CD4-positive, alpha-beta memory T cell (primary cell): ENCODE measurements at regions of chr3 and their contacts with region 1.

Region 1: GRCh38 chr3:142279965-142280590 is 54.7 kb upstream of the GK5 start:
- DNase-seq: peak; percentile 47 to 64 (median 60)
- H3K4me3 ChIP-seq: no peak overlapping the region
- H3K4me3 Mint-ChIP-seq: no peak overlapping the region
- H3K27ac ChIP-seq: no peak overlapping the region
- H3K27ac Mint-ChIP-seq: peak overlapping the region in 1 of 7 donors; percentile 38
- H3K4me1 ChIP-seq: peaks cover 3% of the 10 kb centered on the region
- H3K4me1 Mint-ChIP-seq: peaks cover 13 to 24% (median 17%) of the 10 kb centered on the region in 4 donors
- H3K27me3 ChIP-seq: no peaks in the 10 kb centered on the region
- H3K27me3 Mint-ChIP-seq: no peaks in the 10 kb centered on the region

Region 2: GRCh38 chr3:140736863-140737460 is 1543.1 kb before region 1 on chr3:
- CTCF ChIA-PET with region 1: no interaction called
- POLR2A ChIA-PET with region 1: no interaction called
- intact Hi-C with region 1: no loop called
- DNase-seq: no peak
- H3K4me3 ChIP-seq: no peak overlapping the region
- H3K4me3 Mint-ChIP-seq: no peak overlapping the region
- H3K27ac ChIP-seq: no peak overlapping the region
- H3K27ac Mint-ChIP-seq: no peak overlapping the region
- H3K4me1 ChIP-seq: no peaks in the 10 kb centered on the region
- H3K4me1 Mint-ChIP-seq: no peaks in the 10 kb centered on the region
- H3K27me3 ChIP-seq: no peaks in the 10 kb centered on the region
- H3K27me3 Mint-ChIP-seq: peaks cover 2 to 7% of the 10 kb centered on the region in 2 donors

Region 3: DNA sequence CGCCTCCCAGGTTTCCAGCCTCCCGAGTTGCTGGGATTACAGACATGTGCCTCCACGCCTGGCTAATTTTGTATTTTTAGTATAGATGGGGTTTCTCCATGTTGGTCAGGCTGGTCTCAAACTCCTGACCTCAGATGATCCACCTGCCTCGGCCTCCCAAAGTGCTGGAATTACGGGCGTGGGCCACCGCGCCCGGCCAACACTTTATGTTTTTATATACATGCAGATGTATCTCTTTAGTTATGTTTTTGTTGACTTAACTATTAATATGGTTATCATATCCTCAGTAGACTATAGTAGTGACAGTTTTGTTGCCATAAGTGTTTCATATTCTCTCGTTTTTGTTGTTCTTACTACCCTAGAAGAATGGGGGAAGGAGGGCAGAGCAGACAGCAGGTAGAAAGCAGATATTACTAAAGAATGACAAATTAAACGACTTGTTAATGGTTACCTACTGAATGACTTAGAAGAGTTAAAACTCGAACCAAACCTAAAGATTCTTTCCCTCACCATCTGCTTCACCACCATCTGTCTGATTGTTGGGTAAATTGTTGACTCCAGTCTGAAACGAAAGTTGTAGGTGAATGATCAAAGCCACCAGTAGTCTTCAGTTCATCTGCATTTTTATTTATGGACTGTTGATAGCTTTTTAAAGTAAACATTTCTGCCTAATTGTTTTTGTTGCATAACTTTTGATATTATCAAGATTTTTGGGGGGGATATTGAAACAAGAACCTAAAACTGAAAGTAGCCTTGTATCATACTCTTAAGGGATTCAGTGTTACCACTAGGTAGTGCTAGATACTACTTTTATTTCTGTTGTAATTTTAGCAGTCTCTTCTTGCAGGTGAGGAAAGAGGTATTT is 704.0 kb before region 1 on chr3:
- CTCF ChIA-PET with region 1: no interaction called
- POLR2A ChIA-PET with region 1: no interaction called
- intact Hi-C with region 1: loop called (anchors 5 kb)
- DNase-seq: peak in 4 of 5 donors; percentile 16 to 27 (median 23)
- H3K4me3 ChIP-seq: no peak overlapping the region
- H3K4me3 Mint-ChIP-seq: peak overlapping the region; percentile 10 to 70 (median 50)
- H3K27ac ChIP-seq: no peak overlapping the region
- H3K27ac Mint-ChIP-seq: peak overlapping the region; percentile 60 to 91 (median 72)
- H3K4me1 ChIP-seq: peaks cover 7% of the 10 kb centered on the region
- H3K4me1 Mint-ChIP-seq: peaks cover 7 to 8% (median 8%) of the 10 kb centered on the region in 4 donors
- H3K27me3 ChIP-seq: no peaks in the 10 kb centered on the region
- H3K27me3 Mint-ChIP-seq: no peaks in the 10 kb centered on the region

Region 4: DNA sequence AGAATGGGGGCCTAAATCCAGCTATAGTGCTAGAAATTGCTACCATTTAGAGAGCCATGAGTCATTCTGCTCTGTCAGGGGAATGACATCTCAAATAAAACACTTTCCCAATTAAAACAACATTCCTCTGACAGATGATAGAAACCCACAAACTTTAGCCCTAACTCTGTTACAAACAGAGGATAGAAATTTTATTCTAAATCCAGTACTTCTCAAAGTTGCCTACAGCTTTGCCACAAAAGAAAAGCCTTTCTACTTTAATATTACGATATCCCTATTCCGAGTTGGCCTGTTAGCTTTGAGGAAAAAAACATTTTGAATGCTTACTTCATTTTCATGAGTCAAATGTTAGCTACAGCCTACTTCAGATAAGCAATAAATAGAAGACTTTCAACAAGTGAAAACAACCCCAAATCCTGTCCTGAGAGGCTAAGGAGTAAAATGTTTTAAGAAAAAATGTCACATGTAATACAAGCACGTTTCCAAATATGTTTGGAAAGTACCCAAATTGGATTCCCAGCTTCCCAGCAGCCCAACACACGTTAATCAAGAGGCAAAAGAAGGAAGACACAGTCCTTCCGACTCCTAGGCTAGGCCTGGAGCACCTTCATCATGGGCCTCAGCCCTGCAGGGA is 320.0 kb before region 1 on chr3:
- CTCF ChIA-PET with region 1: interaction called, 20 read pairs
- POLR2A ChIA-PET with region 1: no interaction called
- intact Hi-C with region 1: no loop called
- DNase-seq: no peak
- H3K4me3 ChIP-seq: no peak overlapping the region
- H3K4me3 Mint-ChIP-seq: no peak overlapping the region
- H3K27ac ChIP-seq: no peak overlapping the region
- H3K27ac Mint-ChIP-seq: no peak overlapping the region
- H3K4me1 ChIP-seq: no peaks in the 10 kb centered on the region
- H3K4me1 Mint-ChIP-seq: peaks cover 0 to 3% (median 0%) of the 10 kb centered on the region in 4 donors
- H3K27me3 ChIP-seq: no peaks in the 10 kb centered on the region
- H3K27me3 Mint-ChIP-seq: no peaks in the 10 kb centered on the region

Region 5: GRCh38 chr3:142124243-142124642 is 155.8 kb before region 1 on chr3:
- CTCF ChIA-PET with region 1: interaction called, 97 read pairs
- POLR2A ChIA-PET with region 1: interaction called, 3 read pairs
- intact Hi-C with region 1: loop called (anchors 1 kb)
- DNase-seq: no peak
- H3K4me3 ChIP-seq: no peak overlapping the region
- H3K4me3 Mint-ChIP-seq: no peak overlapping the region
- H3K27ac ChIP-seq: no peak overlapping the region
- H3K27ac Mint-ChIP-seq: no peak overlapping the region
- H3K4me1 ChIP-seq: no peaks in the 10 kb centered on the region
- H3K4me1 Mint-ChIP-seq: peaks cover 0 to 3% (median 1%) of the 10 kb centered on the region in 4 donors
- H3K27me3 ChIP-seq: no peaks in the 10 kb centered on the region
- H3K27me3 Mint-ChIP-seq: no peaks in the 10 kb centered on the region

Region 6: DNA sequence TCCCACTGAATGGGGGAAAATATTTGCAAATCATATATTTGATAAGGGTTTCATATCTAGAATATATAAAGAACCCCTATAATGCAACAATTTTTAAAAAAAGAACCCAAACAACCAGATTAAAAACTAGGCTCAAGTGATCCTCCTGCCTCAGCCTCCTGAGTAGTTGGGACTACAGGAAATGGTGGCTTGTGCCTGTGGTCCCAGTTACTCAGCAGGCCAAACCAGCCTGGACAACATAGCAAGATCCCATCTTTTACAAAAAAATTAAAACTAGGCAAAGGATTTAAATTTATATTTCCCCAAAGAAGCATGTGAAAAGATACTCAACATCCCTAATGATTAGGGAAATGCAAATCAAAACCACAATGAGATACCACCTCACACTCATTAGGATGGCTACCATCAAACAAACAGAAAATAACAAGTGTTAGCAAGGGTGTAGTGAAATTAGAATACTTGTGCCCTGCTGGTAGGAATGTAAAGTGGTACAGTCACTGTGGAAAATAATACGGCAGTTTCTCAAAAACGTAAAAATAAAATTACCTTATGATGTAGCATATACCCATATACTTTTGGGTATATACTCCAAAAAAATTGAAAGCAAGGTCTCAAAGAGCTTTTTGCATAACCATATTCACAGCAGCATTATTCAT is 150.4 kb before region 1 on chr3:
- CTCF ChIA-PET with region 1: interaction called, 97 read pairs
- POLR2A ChIA-PET with region 1: interaction called, 3 read pairs
- intact Hi-C with region 1: loop called (anchors 1 kb)
- DNase-seq: no peak
- H3K4me3 ChIP-seq: no peak overlapping the region
- H3K4me3 Mint-ChIP-seq: no peak overlapping the region
- H3K27ac ChIP-seq: no peak overlapping the region
- H3K27ac Mint-ChIP-seq: no peak overlapping the region
- H3K4me1 ChIP-seq: no peaks in the 10 kb centered on the region
- H3K4me1 Mint-ChIP-seq: peaks cover 0 to 4% (median 2%) of the 10 kb centered on the region in 4 donors
- H3K27me3 ChIP-seq: no peaks in the 10 kb centered on the region
- H3K27me3 Mint-ChIP-seq: no peaks in the 10 kb centered on the region

Region 7: GRCh38 chr3:142180761-142181362 is 99.2 kb before region 1 on chr3:
- CTCF ChIA-PET with region 1: interaction called, 37 read pairs
- POLR2A ChIA-PET with region 1: no interaction called
- intact Hi-C with region 1: loop called (anchors 2 kb)
- DNase-seq: peak in 4 of 5 donors; percentile 3 to 28 (median 8)
- H3K4me3 ChIP-seq: no peak overlapping the region
- H3K4me3 Mint-ChIP-seq: no peak overlapping the region
- H3K27ac ChIP-seq: no peak overlapping the region
- H3K27ac Mint-ChIP-seq: no peak overlapping the region
- H3K4me1 ChIP-seq: no peaks in the 10 kb centered on the region
- H3K4me1 Mint-ChIP-seq: no peaks in the 10 kb centered on the region
- H3K27me3 ChIP-seq: no peaks in the 10 kb centered on the region
- H3K27me3 Mint-ChIP-seq: no peaks in the 10 kb centered on the region

Region 8: GRCh38 chr3:142239421-142239820 is 40.7 kb before region 1 on chr3:
- CTCF ChIA-PET with region 1: no interaction called
- POLR2A ChIA-PET with region 1: no interaction called
- intact Hi-C with region 1: no loop called
- DNase-seq: no peak
- H3K4me3 ChIP-seq: no peak overlapping the region
- H3K4me3 Mint-ChIP-seq: no peak overlapping the region
- H3K27ac ChIP-seq: no peak overlapping the region
- H3K27ac Mint-ChIP-seq: no peak overlapping the region
- H3K4me1 ChIP-seq: no peaks in the 10 kb centered on the region
- H3K4me1 Mint-ChIP-seq: no peaks in the 10 kb centered on the region
- H3K27me3 ChIP-seq: no peaks in the 10 kb centered on the region
- H3K27me3 Mint-ChIP-seq: peaks cover 9% of the 10 kb centered on the region in 2 donors